MCF 10A (cell line): ENCODE measurements at regions of chr7 and their contacts with region 1.

Region 1: GRCh38 chr7:26090927-26091519 is 61.0 kb upstream of the NFE2L3 start:
- DNase-seq: peak; percentile 60
- H3K4me3 Mint-ChIP-seq: no peak overlapping the region
- H3K27ac Mint-ChIP-seq: no peak overlapping the region
- H3K4me1 Mint-ChIP-seq: peaks cover 26% of the 10 kb centered on the region
- H3K27me3 Mint-ChIP-seq: no peaks in the 10 kb centered on the region
- CTCF ChIP-seq: peak; percentile 78

Region 2: DNA sequence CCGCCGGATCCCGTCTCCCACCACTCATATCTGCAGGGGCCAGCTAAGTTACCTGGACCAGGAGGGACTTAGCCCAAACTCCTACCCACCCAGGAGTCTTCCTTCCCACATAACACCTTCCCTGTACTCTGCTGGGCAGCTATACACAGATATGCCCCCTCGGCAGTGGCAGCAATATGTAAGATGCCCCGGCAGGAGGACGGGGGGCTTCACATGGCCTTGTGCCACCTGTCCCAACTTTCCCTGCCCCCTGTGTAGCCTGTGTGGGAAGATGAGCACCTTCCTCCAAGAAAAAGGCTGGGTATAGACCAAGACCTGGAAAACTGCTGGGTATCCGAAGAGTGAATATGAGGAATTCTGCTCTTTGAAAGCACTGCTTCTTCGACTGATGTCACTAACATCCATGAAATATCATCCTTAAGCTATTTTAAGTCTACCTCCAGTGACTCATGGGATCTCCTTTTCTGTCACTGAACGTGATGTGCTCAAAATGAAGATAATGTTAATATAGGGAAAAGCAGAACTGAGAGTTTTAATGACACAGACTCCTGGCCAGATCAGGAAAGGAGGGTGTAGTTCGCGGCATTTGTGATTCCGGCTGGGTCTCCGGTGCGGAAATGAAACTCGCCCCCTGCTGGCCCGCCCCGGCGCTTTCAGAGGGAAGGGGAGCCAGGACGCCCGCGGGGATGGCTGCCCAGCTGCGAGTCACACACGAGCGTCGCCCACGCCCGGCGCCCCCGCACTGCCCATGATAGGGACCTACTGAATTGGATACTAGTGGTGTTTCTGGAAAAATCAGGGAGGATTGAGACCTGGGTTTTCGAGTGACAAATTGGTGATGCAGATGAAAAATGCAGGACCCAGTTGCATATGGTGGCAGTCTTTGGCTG is 195.9 kb before region 1 on chr7:
- CTCF ChIA-PET with region 1: interaction called, 31 read pairs
- POLR2A ChIA-PET with region 1: interaction called, 5 read pairs
- intact Hi-C with region 1: no loop called
- DNase-seq: peak; percentile 6
- H3K4me3 Mint-ChIP-seq: peak overlapping the region; percentile 45
- H3K27ac Mint-ChIP-seq: no peak overlapping the region
- H3K4me1 Mint-ChIP-seq: peaks cover 10% of the 10 kb centered on the region
- H3K27me3 Mint-ChIP-seq: no peaks in the 10 kb centered on the region
- CTCF ChIP-seq: peak; percentile 28

Region 3: DNA sequence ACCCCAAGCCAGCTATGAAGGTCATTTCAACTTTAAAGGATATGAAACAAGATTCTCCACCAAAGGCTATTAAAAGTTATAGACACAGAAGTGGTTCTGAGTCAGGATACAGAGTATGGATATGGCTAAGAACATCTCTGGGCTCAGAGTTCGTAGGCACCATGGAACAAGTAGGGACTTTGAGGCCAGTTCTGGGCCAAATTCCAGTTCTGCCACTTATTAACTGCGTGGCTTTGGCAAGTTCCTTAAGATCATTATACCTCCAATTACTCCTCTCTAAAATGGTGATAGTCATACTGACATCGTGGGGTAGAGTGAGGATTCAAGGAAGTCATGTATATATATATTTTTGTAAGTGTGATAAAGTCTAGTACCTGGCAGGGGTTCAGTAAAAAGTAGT is 44.9 kb before region 1 on chr7:
- CTCF ChIA-PET with region 1: no interaction called
- POLR2A ChIA-PET with region 1: no interaction called
- intact Hi-C with region 1: no loop called
- DNase-seq: no peak
- H3K4me3 Mint-ChIP-seq: no peak overlapping the region
- H3K27ac Mint-ChIP-seq: no peak overlapping the region
- H3K4me1 Mint-ChIP-seq: no peaks in the 10 kb centered on the region
- H3K27me3 Mint-ChIP-seq: peaks cover 21% of the 10 kb centered on the region
- CTCF ChIP-seq: no peak

Region 4: DNA sequence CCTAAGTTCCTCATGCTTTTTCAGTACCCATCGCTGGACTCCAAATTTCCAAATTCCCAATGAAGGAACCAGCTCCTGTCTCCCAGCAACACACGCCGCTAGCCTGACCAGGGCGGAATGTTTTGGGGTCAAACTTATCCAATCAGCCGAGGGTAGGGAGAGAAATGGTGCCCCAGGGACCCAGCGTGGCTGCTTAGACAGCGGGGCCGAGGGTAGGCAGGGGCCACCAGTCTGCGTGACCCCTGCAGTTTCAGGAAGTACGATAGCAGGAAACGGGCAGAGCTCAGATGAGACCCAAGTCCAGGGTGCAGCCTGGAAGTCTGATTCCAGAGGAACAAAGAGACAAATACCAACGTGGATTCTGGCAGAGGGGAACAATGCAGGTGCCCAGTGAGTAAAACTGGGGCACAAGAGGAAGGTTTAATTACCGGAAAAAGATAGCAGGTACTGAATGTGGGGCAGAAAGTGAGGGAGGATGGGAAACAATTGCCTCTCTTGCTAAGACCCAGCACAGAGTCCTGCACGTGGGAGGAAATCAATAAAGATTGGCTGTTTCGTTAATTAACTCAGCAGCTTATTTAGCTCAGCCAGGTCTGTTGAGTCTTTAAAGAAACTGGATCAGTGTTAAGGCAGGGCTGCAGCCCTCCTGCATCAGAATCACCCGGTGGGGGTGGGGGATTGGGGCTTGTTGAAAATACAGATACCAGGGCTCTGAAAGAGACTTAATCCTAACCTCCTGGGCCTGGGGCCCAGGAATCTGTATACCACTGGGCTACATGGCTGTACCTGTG is 10.5 kb after region 1 on chr7:
- CTCF ChIA-PET with region 1: interaction called, 31 read pairs
- POLR2A ChIA-PET with region 1: interaction called, 5 read pairs
- intact Hi-C with region 1: no loop called
- DNase-seq: no peak
- H3K4me3 Mint-ChIP-seq: no peak overlapping the region
- H3K27ac Mint-ChIP-seq: no peak overlapping the region
- H3K4me1 Mint-ChIP-seq: peaks cover 10% of the 10 kb centered on the region
- H3K27me3 Mint-ChIP-seq: no peaks in the 10 kb centered on the region
- CTCF ChIP-seq: no peak

Region 5: DNA sequence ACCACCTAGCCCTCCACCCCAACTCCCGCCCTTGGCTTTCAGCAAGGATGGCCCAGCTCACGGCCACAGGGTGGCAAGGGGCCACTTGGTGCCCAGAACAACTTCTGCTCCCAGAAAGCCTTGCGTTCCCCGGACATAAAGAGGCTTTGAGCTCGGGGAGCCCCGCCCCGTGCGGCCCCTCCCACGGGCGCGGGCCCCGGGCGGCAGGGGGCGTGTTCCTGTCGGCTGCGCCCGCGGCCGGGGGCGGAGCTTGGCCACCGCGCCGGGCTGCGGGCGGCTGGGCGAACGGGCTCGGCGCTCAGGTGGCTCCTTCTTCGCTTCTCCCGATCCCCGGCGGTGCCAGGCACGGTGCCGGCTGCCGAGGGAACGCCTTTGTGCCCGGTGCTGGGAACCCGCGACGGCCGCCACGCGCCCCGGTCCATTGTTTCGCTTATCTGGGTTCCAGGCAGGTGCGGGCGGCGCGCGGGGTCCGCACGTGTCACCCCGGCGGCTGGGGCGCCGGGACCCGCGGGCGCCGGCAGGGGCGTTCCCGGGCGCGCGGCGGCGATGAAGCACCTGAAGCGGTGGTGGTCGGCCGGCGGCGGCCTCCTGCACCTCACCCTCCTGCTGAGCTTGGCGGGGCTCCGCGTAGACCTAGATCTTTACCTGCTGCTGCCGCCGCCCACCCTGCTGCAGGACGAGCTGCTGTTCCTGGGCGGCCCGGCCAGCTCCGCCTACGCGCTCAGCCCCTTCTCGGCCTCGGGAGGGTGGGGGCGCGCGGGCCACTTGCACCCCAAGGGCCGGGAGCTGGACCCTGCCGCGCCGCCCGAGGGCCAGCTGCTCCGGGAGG is 61.1 kb after region 1 on chr7 and contains the start of gene NFE2L3:
- CTCF ChIA-PET with region 1: interaction called, 12 read pairs
- POLR2A ChIA-PET with region 1: interaction called, 3 read pairs
- intact Hi-C with region 1: loop called (anchors 5 kb)
- DNase-seq: peak; percentile 64
- H3K4me3 Mint-ChIP-seq: peak within 1 kb of the TSS; percentile 66
- H3K27ac Mint-ChIP-seq: no peak within 1 kb of the TSS
- H3K4me1 Mint-ChIP-seq: peaks cover 23% of the 10 kb centered on the region
- H3K27me3 Mint-ChIP-seq: no peaks in the 10 kb centered on the region
- CTCF ChIP-seq: no peak
- total RNA-seq, gene NFE2L3: 1.2 and 2.2 TPM in 2 replicates

Region 6: GRCh38 chr7:26182283-26182682 is 91.3 kb after region 1 on chr7:
- CTCF ChIA-PET with region 1: interaction called, 28 read pairs
- POLR2A ChIA-PET with region 1: interaction called, 83 read pairs
- intact Hi-C with region 1: loop called (anchors 2 kb)
- DNase-seq: peak; percentile 52
- H3K4me3 Mint-ChIP-seq: no peak overlapping the region
- H3K27ac Mint-ChIP-seq: no peak overlapping the region
- H3K4me1 Mint-ChIP-seq: peaks cover 6% of the 10 kb centered on the region
- H3K27me3 Mint-ChIP-seq: no peaks in the 10 kb centered on the region
- CTCF ChIP-seq: no peak

Region 7: GRCh38 chr7:26193432-26194207 is 102.6 kb after region 1 on chr7:
- CTCF ChIA-PET with region 1: interaction called, 123 read pairs
- POLR2A ChIA-PET with region 1: interaction called, 268 read pairs
- intact Hi-C with region 1: loop called (anchors 1 kb)
- DNase-seq: no peak
- H3K4me3 Mint-ChIP-seq: peak overlapping the region; percentile 98
- H3K27ac Mint-ChIP-seq: no peak overlapping the region
- H3K4me1 Mint-ChIP-seq: peaks cover 29% of the 10 kb centered on the region
- H3K27me3 Mint-ChIP-seq: no peaks in the 10 kb centered on the region
- CTCF ChIP-seq: no peak

Region 8: GRCh38 chr7:26284995-26285632 is 194.1 kb after region 1 on chr7:
- CTCF ChIA-PET with region 1: interaction called, 19 read pairs
- POLR2A ChIA-PET with region 1: interaction called, 5 read pairs
- intact Hi-C with region 1: loop called (anchors 2 kb)
- DNase-seq: peak; percentile 81
- H3K4me3 Mint-ChIP-seq: no peak overlapping the region
- H3K27ac Mint-ChIP-seq: no peak overlapping the region
- H3K4me1 Mint-ChIP-seq: no peaks in the 10 kb centered on the region
- H3K27me3 Mint-ChIP-seq: no peaks in the 10 kb centered on the region
- CTCF ChIP-seq: peak; percentile 39